ENCODE measurements at regions of chr4 and their contacts with region 1.

Region 1: DNA sequence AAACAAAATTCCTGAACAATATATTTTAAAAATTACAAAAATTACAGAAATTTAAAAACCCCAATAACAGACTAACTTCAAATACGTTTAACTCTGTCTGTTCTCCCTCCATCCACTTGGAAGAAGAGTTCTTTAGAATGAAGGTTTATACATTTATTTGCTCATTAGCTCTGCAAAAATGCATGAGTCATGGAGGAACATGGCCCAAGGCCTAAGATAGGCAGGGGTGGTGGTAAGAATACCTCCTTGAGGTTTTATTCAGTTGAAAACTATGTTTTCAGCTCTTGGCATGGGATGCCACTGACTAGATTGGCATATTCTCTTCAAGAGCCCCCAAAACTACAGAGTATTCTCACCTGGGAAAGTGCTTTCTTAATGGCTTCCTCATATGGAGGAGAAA is 8.8 kb upstream of the LRRC66 start:
- DNase-seq: no peak
- ATAC-seq: no peak
- H3K4me3 Mint-ChIP-seq: no peak overlapping the region
- H3K27ac Mint-ChIP-seq: no peak overlapping the region
- H3K4me1 Mint-ChIP-seq: no peaks in the 10 kb centered on the region
- H3K27me3 Mint-ChIP-seq: no peaks in the 10 kb centered on the region

Region 2: GRCh38 chr4:51831133-51831532 is 197.8 kb before region 1 on chr4:
- CTCF ChIA-PET with region 1: interaction called, 6 read pairs
- POLR2A ChIA-PET with region 1: no interaction called
- intact Hi-C with region 1: loop called (anchors 1 kb)
- DNase-seq: peak; percentile 80
- ATAC-seq: no peak
- H3K4me3 Mint-ChIP-seq: no peak overlapping the region
- H3K27ac Mint-ChIP-seq: no peak overlapping the region
- H3K4me1 Mint-ChIP-seq: peaks cover 1% of the 10 kb centered on the region
- H3K27me3 Mint-ChIP-seq: peaks cover 9% of the 10 kb centered on the region

Region 3: GRCh38 chr4:51895813-51896408 is 133.1 kb before region 1 on chr4:
- CTCF ChIA-PET with region 1: interaction called, 3 read pairs
- POLR2A ChIA-PET with region 1: no interaction called
- intact Hi-C with region 1: loop called in 1 of 2 experiments (anchors 1 kb)
- DNase-seq: peak; percentile 68
- ATAC-seq: peak; percentile 97
- H3K4me3 Mint-ChIP-seq: no peak overlapping the region
- H3K27ac Mint-ChIP-seq: no peak overlapping the region
- H3K4me1 Mint-ChIP-seq: peaks cover 10% of the 10 kb centered on the region
- H3K27me3 Mint-ChIP-seq: no peaks in the 10 kb centered on the region

Region 4: GRCh38 chr4:52199574-52200338 is 170.8 kb after region 1 on chr4:
- CTCF ChIA-PET with region 1: no interaction called
- POLR2A ChIA-PET with region 1: no interaction called
- intact Hi-C with region 1: no loop called
- DNase-seq: no peak
- ATAC-seq: no peak
- H3K4me3 Mint-ChIP-seq: no peak overlapping the region
- H3K27ac Mint-ChIP-seq: no peak overlapping the region
- H3K4me1 Mint-ChIP-seq: no peaks in the 10 kb centered on the region
- H3K27me3 Mint-ChIP-seq: peaks cover 3% of the 10 kb centered on the region